ENCODE measurements at regions of chr12 and their contacts with region 1.

Region 1: DNA sequence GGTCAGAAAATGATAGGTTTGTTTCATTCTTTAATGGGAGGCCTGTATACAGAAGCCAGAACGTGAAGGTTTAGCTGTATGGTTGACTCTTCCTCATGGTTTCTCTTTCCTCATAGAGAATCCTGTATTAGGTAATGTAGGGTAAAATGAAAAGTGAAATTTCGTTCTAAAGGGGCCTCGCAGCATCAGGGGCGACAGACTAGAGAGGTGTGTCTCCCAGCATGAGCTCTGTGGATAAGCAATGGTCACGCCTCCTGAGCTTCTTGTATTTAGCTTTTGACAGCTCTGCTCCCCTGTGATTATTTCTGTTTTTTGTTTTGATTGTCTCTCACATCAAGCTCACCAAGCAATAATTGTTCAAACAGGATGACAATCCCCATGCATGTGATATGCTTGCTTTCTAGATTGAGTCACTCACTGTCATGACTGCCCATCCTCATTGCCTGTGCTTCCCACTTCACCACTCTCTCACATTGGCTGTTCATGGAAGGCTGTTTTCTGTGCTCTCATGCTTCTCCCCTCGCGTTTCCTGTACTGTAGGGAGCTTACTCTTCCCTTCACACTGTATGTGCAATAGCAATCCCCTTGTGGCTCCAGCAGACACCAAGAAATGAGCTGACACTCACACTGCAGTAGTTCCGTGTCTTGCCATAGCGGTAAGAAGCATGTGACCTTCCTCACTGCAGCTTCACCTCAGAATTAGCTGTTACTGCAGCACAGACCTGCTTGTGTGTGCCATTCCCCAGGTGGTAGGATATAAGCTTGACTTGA is 44.0 kb downstream of the RAD52 start:
- DNase-seq: no peak
- H3K4me3 ChIP-seq: no peak overlapping the region
- H3K27ac ChIP-seq: no peak overlapping the region
- H3K4me1 ChIP-seq: peaks cover 23% of the 10 kb centered on the region
- H3K27me3 ChIP-seq: no peaks in the 10 kb centered on the region
- CTCF ChIP-seq: no peak

Region 2: DNA sequence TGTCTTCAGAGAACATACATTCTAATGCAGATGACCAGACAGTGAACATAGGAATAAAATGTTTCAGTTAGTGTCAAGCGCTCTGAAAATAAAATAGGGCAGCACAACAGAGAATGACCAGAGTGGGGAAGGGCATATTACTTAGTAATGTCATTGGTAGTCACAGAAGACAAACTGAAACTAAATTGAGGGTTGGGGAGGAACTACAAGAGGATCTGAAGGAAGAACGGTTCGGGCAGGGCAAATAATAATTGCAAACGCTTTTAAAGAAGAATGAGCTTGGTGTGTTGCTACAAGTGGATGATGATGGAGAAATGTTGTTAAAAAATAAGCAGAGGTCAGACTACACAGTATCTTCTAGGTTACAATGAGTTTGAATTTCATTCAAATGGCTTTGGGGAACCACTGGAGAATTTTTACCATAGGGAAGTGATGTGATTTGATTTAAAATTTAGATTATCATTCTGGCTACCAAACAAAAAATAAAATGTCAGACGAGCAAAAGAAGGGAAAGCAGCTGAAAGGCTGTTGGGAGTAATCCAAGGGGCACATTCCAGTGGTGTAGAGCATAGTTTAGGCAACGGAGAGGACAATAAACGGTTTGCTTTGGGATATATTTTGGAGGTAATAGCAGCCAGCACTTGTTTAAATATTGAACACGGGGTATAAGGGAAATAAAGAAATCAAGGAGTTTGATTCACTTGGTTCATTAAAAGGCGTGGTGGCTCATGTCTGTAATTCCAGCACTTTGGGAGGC is 586.5 kb before region 1 on chr12:
- CTCF ChIA-PET with region 1: no interaction called
- POLR2A ChIA-PET with region 1: no interaction called
- intact Hi-C with region 1: no loop called
- DNase-seq: no peak
- H3K4me3 ChIP-seq: no peak overlapping the region
- H3K27ac ChIP-seq: no peak overlapping the region
- H3K4me1 ChIP-seq: no peaks in the 10 kb centered on the region
- H3K27me3 ChIP-seq: no peaks in the 10 kb centered on the region
- CTCF ChIP-seq: no peak

Region 3: GRCh38 chr12:1737652-1738286 is 832.3 kb after region 1 on chr12:
- CTCF ChIA-PET with region 1: no interaction called
- POLR2A ChIA-PET with region 1: interaction called, 15 read pairs
- intact Hi-C with region 1: no loop called
- DNase-seq: no peak
- H3K4me3 ChIP-seq: no peak overlapping the region
- H3K27ac ChIP-seq: no peak overlapping the region
- H3K4me1 ChIP-seq: peaks cover 21% of the 10 kb centered on the region
- H3K27me3 ChIP-seq: no peaks in the 10 kb centered on the region
- CTCF ChIP-seq: no peak